ENCODE measurements at regions of chr3 and their contacts with region 1.

Region 1: DNA sequence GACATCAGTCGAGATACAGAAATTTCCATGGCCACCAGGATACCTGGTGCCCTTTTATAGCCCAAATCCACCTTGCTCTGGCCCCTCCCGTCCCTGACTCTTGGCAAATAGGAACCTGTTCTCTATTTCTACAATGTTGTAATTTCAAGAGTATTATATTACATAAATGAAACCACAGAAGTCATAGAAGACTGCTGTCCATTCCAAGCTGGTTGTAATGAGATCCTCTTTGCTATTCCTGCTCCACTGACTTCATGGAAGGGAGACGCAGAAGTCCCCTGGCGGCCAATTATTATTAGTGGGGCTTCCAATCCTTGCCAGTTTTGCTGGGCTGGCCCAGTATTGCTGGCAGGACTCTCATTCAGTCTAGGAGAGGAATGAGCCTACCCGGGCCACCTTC is 26.6 kb downstream of the DCP1A start:
- H3K4me3 ChIP-seq: no peak overlapping the region
- H3K27ac ChIP-seq: no peak overlapping the region
- H3K4me1 ChIP-seq: peaks cover 7% of the 10 kb centered on the region
- CTCF ChIP-seq: no peak

Region 2: GRCh38 chr3:53259427-53260259 is 61.1 kb before region 1 on chr3:
- CTCF ChIA-PET with region 1: interaction called, 3 read pairs
- POLR2A ChIA-PET with region 1: interaction called, 10 read pairs
- H3K4me3 ChIP-seq: no peak overlapping the region
- H3K27ac ChIP-seq: no peak overlapping the region
- H3K4me1 ChIP-seq: no peaks in the 10 kb centered on the region
- CTCF ChIP-seq: no peak

Region 3: DNA sequence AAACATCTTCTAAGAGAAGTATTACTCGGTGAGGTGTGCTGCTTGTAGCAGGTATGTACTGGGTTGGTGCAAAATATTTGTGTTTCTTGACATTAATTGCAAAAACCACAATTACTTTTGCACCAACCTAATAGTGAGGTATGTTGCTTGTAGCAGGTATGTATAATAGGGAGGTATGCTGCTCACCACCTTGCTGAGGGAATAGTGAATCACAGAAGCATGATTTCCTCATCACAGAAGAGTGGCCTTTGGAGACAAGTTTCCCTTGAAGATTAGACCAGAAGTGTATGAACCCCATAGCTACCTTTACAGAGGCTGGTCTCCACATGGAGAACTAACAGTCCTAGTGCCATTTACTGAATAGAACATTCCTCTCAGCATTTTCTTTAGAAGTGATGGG is 11.2 kb after region 1 on chr3:
- CTCF ChIA-PET with region 1: no interaction called
- POLR2A ChIA-PET with region 1: no interaction called
- H3K4me3 ChIP-seq: no peak overlapping the region
- H3K27ac ChIP-seq: no peak overlapping the region
- H3K4me1 ChIP-seq: no peaks in the 10 kb centered on the region
- CTCF ChIP-seq: no peak

Measured in HEK293 (cell line).